Heart right ventricle (tissue), 16 donors: ENCODE measurements at regions of chr20 and their contacts with region 1.

Region 1: DNA sequence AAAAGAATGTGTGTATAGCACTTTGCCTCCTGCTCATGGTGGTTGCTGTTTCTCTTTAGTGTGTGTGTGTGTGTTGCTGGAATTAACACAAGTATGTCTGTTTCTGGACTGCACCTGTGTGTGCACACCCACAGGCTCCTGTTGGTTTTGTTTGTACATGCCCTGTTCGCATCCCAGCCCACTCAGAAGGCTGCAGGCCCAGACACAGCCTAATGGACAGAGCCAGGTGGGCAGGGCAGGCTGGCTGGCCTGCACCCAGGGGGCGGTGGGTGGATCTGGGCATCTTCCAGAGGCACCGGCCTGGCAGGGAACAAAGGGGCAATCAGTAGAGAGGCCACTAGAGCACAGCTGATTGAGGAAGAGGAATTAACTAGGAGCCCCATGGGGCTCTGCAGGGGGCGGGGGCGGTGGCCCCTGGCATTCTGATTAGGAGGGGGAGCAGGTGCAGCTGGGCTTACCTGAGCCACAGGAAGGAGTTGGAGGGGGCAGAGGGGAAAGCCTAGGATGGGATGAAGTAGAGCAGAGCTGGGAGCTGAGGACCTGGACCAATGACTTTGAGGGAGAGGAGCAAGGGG is 21.9 kb downstream of the CD40 start:
- DNase-seq: no peak
- ATAC-seq: no peak
- H3K4me3 ChIP-seq: no peak overlapping the region
- H3K27ac ChIP-seq: no peak overlapping the region
- H3K4me1 ChIP-seq: no peaks in the 10 kb centered on the region
- H3K27me3 ChIP-seq: peaks cover 0 to 90% (median 66%) of the 10 kb centered on the region in 7 donors
- CTCF ChIP-seq: no peak

Region 2: DNA sequence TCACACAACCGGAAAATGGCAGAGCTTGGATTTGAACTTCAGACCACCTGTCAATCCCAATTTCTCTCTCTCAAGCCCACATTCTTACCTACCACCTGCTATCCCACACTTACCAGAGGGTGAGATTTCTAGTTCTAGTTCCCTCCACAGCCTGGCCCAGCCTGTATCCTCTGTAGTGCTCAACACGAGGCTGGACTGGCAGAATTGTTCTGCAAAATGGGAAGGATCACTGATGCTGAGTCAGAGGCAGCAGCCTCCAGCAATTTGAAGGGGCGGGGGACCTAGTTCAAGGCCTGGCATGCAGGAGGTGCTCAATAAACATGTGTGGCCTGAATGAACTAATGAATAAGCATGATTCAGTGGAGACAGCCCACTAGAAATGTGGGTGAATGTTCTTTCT is 1717.9 kb before region 1 on chr20:
- intact Hi-C with region 1: no loop called
- DNase-seq: no peak
- ATAC-seq: no peak
- H3K4me3 ChIP-seq: no peak overlapping the region
- H3K27ac ChIP-seq: no peak overlapping the region
- H3K4me1 ChIP-seq: no peaks in the 10 kb centered on the region
- H3K27me3 ChIP-seq: peaks cover 0 to 29% (median 14%) of the 10 kb centered on the region in 7 donors
- CTCF ChIP-seq: no peak

Region 3: DNA sequence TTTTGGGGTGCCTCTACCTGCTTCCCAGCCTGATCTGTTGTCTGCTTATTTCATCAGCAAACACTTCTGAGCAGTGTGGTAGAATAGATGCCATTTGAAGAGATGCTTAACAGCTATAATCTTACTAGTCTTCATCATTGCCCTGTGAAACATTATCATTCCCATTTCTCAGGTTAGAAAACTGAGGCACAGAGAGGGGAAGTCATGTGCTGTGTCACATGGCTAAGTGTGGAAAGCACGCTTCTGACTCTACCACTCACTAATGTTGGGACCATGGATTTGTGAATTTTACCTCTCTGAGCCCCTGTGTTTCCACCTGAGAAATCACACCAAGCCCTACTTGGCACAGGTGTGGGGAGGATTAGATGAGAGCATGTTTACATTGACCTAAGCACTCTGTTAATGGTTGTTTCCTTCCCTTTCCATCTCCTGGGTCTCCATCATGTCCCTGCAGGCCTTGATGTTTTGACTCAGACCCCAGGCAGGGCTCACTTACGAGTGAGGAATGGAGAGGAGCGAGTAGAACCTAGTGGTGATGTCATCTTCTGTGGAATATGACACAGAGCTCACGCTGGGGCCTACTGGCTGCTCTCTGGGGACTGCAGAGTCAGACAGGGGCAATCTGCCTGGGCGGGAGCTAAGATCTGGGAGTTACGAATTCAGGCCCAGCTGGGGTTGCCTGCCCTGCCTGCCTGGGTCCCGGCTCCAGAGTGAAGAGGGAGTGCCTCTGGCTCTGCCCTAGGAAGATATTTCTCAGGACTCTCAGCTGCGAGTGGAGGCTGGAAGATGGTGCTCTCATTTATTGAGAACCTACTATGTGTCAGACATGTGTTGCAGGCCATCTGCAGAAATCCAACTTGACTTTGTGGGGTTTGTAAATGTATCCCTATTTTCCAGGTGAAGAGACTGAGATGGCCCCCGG is 104.0 kb after region 1 on chr20:
- intact Hi-C with region 1: loop called in 1 of 10 experiments (anchors 10 kb)
- DNase-seq: no peak
- ATAC-seq: no peak
- H3K4me3 ChIP-seq: no peak overlapping the region
- H3K27ac ChIP-seq: no peak overlapping the region
- H3K4me1 ChIP-seq: no peaks in the 10 kb centered on the region
- H3K27me3 ChIP-seq: peaks cover 7 to 85% (median 61%) of the 10 kb centered on the region in 7 donors
- CTCF ChIP-seq: no peak